H1 (cell line): ENCODE measurements at regions of chr3 and their contacts with region 1.

Region 1: GRCh38 chr3:30319713-30320112 is 286.7 kb upstream of the TGFBR2 start:
- DNase-seq: peak; percentile 7 to 43
- H3K4me3 ChIP-seq: no peak overlapping the region
- H3K27ac ChIP-seq: no peak overlapping the region
- H3K4me1 ChIP-seq: peaks cover 0 to 5% (median 0%) of the 10 kb centered on the region in 4 experiments; a peak in 1 of 7 replicates
- H3K27me3 ChIP-seq: no peaks in the 10 kb centered on the region
- CTCF ChIP-seq: peak in 2 of 3 experiments; percentile 59 to 74; a peak in 3 of 4 replicates
- EP300 ChIP-seq: no peak
- POLR2A ChIP-seq: no peak
- RAD21 ChIP-seq: peak; percentile 68 to 78

Region 2: DNA sequence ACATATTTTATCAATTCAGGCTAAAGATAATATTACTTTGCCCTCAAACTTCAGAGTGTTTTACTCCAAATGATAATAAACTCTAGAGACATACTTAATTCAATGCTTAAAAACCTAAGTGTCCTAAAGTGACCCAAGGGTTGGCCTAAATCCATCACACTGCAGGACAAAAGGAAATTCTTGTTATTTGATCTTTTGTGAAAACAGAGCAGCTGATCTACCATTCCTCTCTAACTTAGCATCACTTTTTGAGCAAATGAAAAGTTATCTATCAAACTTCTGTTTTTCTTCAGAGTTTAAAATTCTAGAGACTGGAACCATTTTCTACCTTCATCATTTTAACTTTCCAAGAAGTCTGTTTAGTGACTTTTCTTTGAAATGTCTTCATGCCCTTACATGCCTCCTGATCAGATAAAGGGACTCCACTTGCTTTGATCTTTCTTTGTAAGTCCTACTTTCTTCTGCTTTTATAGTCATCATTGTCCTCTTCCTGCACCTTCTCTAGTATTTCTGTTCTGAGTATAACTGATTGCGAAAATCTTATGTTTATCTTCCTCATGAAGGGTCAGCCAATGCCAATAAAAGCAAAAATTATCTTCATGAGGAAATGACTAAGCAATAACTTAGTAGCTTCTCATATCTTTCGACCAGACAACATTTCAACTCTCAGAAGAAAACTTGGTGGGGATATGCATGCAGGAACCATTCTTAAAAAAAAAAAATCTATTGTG is 92.0 kb before region 1 on chr3:
- CTCF ChIA-PET with region 1: no interaction called
- POLR2A ChIA-PET with region 1: no interaction called
- DNase-seq: no peak
- H3K4me3 ChIP-seq: no peak overlapping the region
- H3K27ac ChIP-seq: no peak overlapping the region
- H3K4me1 ChIP-seq: no peaks in the 10 kb centered on the region
- H3K27me3 ChIP-seq: no peaks in the 10 kb centered on the region
- CTCF ChIP-seq: no peak
- EP300 ChIP-seq: no peak
- POLR2A ChIP-seq: no peak
- RAD21 ChIP-seq: no peak

Region 3: DNA sequence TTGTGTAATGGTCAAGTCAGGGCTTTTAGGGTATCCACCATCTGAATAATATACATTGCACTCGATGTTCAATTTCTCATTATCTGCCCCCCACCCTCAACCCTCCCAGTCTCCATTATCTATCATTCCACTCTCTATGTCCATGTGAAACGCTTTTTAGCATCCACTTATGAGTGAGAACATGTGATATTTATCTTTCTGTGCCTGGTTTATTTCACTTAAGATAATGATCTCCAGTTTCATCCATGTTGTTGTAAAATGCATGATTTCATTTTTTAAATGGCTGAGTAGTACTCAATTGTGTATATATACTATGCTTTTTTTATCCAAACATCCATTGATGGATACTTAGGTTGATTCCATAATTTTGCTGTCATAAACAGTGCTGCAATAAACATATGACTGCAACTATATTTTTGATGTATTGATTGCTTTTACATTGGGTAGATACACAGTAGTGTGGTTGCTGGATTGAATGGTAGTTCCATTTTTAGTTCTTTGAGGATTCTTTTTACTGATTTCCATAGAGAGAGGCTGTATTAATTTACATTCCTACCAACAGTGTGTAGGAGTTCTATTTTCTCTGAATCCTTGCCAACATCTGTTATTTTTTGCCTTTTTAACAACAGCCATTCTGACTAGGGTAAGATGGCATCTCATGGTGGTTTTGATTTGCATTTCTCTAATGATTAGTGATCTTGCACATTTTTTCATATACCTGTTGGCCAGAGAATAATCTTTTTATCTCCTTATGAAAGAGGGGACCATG is 46.2 kb before region 1 on chr3:
- CTCF ChIA-PET with region 1: no interaction called
- POLR2A ChIA-PET with region 1: no interaction called
- DNase-seq: no peak
- H3K4me3 ChIP-seq: no peak overlapping the region
- H3K27ac ChIP-seq: no peak overlapping the region
- H3K4me1 ChIP-seq: no peaks in the 10 kb centered on the region
- H3K27me3 ChIP-seq: no peaks in the 10 kb centered on the region
- CTCF ChIP-seq: no peak
- EP300 ChIP-seq: no peak
- POLR2A ChIP-seq: no peak
- RAD21 ChIP-seq: no peak

Region 4: DNA sequence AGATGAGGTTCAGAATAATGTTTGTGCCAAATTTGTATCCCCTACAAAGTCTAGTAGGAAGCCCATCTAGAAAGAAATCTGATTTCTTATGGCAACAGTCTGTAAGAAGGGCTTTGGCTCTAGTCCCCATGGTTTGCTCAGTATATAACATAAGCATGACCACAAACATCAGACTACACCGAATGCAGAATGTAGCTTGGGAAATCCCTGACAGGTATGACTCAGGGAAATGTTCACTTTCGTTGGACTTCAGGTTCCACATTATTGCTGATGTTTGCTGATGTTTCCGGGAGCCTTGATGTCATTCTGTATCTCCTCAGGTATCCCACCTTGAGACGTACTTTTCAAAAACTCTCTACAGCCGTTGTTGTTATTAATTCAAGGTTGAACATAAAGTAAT is 17.7 kb before region 1 on chr3:
- CTCF ChIA-PET with region 1: interaction called, 13 read pairs
- POLR2A ChIA-PET with region 1: no interaction called
- DNase-seq: no peak
- H3K4me3 ChIP-seq: no peak overlapping the region
- H3K27ac ChIP-seq: no peak overlapping the region
- H3K4me1 ChIP-seq: no peaks in the 10 kb centered on the region
- H3K27me3 ChIP-seq: no peaks in the 10 kb centered on the region
- CTCF ChIP-seq: no peak
- EP300 ChIP-seq: no peak
- POLR2A ChIP-seq: no peak
- RAD21 ChIP-seq: no peak